Dendritic cell treated with granulocyte-macrophage colony-stimulating factor and Interleukin-4, amounts not matched to agents 40 ng/mL and 50 ng/mL, for 4 days (primary cell): ENCODE measurements at regions of chr2 and their contacts with region 1.

Region 1: DNA sequence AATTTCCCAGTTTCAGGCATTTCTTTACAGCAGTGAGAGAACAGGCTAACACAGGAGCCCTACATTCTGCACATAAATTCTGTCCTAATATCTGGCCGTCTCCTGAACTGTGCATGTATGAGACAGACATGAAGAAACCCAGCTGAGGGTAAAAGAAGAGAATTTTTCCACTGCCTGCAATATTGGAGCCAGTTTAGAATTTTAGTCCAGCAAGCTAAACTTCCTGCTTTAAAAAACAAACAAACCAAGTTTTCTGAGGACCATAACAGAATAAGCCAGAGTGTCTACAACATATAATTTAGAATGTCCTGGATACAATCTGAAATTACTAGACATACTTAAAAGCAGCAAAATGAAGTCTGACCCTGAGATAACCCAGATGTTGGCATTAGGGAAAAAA is 215.1 kb upstream of the KLHL29 start:
- H3K4me3 Mint-ChIP-seq: no peak overlapping the region
- H3K27ac Mint-ChIP-seq: no peak overlapping the region
- H3K4me1 Mint-ChIP-seq: no peaks in the 10 kb centered on the region
- H3K27me3 Mint-ChIP-seq: no peaks in the 10 kb centered on the region

Region 2: DNA sequence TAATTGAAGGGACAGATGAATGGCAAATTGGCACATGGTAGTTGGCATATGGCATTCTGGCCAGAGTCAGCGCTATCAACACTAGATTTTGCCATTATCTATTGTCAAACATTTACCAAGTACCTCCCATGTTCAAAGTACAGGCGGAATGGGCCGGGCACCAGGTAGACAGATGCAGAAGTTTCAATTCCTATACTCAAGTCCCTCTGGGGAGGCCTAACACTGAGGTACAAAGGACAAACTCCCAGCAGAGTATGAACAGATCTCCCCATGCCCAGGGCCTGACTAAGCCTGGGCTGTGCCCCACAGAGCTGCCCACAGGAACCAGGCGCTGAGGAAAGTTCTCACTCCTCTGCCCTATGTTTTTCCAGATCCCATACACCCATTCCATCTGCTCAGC is 42.4 kb before region 1 on chr2:
- intact Hi-C with region 1: loop called (anchors 2 kb)
- H3K4me3 Mint-ChIP-seq: no peak overlapping the region
- H3K27ac Mint-ChIP-seq: no peak overlapping the region
- H3K4me1 Mint-ChIP-seq: no peaks in the 10 kb centered on the region
- H3K27me3 Mint-ChIP-seq: no peaks in the 10 kb centered on the region